Esophagus muscularis mucosa (tissue), 4 donors: ENCODE measurements at regions of chr12 and their contacts with region 1.

Region 1: GRCh38 chr12:10153271-10154144 is 18.4 kb downstream of the OLR1 start:
- DNase-seq: peak; percentile 92
- H3K4me3 ChIP-seq: peak overlapping the region; percentile 55 to 65 (median 59)
- H3K27ac ChIP-seq: peak overlapping the region; percentile 75 to 85 (median 81)
- H3K4me1 ChIP-seq: peaks cover 8 to 14% (median 13%) of the 10 kb centered on the region in 4 donors
- H3K27me3 ChIP-seq: no peaks in the 10 kb centered on the region
- CTCF ChIP-seq: peak; percentile 81 to 84 (median 84)
- EP300 ChIP-seq: no peak
- POLR2A ChIP-seq: no peak

Region 2: GRCh38 chr12:9810671-9811070 is 342.8 kb before region 1 on chr12:
- intact Hi-C with region 1: no loop called
- DNase-seq: no peak
- H3K4me3 ChIP-seq: no peak overlapping the region
- H3K27ac ChIP-seq: no peak overlapping the region
- H3K4me1 ChIP-seq: no peaks in the 10 kb centered on the region
- H3K27me3 ChIP-seq: peaks cover 0 to 11% (median 0%) of the 10 kb centered on the region in 4 donors
- CTCF ChIP-seq: no peak
- EP300 ChIP-seq: no peak
- POLR2A ChIP-seq: no peak

Region 3: GRCh38 chr12:10190558-10191388 is 37.3 kb after region 1 on chr12:
- intact Hi-C with region 1: loop called (anchors 2 kb)
- DNase-seq: no peak
- H3K4me3 ChIP-seq: no peak overlapping the region
- H3K27ac ChIP-seq: peak overlapping the region; percentile 59 to 72 (median 69)
- H3K4me1 ChIP-seq: peaks cover 3 to 42% (median 37%) of the 10 kb centered on the region in 4 donors
- H3K27me3 ChIP-seq: no peaks in the 10 kb centered on the region
- CTCF ChIP-seq: peak; percentile 64 to 82 (median 80)
- EP300 ChIP-seq: no peak
- POLR2A ChIP-seq: no peak

Region 4: GRCh38 chr12:10212201-10213131 is 59.0 kb after region 1 on chr12 and contains the start of gene GABARAPL1:
- intact Hi-C with region 1: loop called (anchors 10 kb)
- DNase-seq: peak; percentile 98
- H3K4me3 ChIP-seq: peak within 1 kb of the TSS; percentile 79 to 87 (median 82)
- H3K27ac ChIP-seq: peak within 1 kb of the TSS; percentile 96 to 100 (median 98)
- H3K4me1 ChIP-seq: peaks cover 20 to 34% (median 33%) of the 10 kb centered on the region in 4 donors
- H3K27me3 ChIP-seq: no peaks in the 10 kb centered on the region
- CTCF ChIP-seq: no peak
- EP300 ChIP-seq: peak; percentile 97
- POLR2A ChIP-seq: peak; percentile 25
- total RNA-seq, gene GABARAPL1: 142 to 352 (median 213) TPM